Heart right ventricle (tissue), 16 donors: ENCODE measurements at regions of chr6 and their contacts with region 1.

Region 1: GRCh38 chr6:149925974-149926777 is 3.3 kb upstream of the RAET1G start:
- DNase-seq: peak; percentile 87 to 91
- ATAC-seq: peak; percentile 89 to 94 (median 92)
- H3K4me3 ChIP-seq: peak overlapping the region; percentile 38 to 62 (median 60)
- H3K27ac ChIP-seq: peak overlapping the region in 9 of 10 donors; percentile 27 to 67 (median 57)
- H3K4me1 ChIP-seq: peaks cover 3 to 33% (median 23%) of the 10 kb centered on the region in 9 donors
- H3K27me3 ChIP-seq: peaks cover 0 to 92% (median 28%) of the 10 kb centered on the region in 7 donors
- CTCF ChIP-seq: peak; percentile 81 to 93 (median 88)

Region 2: GRCh38 chr6:149565527-149566409 is 360.4 kb before region 1 on chr6 and contains the start of gene GINM1:
- intact Hi-C with region 1: loop called in 1 of 10 experiments (anchors 5 kb)
- DNase-seq: peak; percentile 93 to 97
- ATAC-seq: peak; percentile 96 to 98 (median 98)
- H3K4me3 ChIP-seq: peak within 1 kb of the TSS; percentile 80 to 100 (median 98)
- H3K27ac ChIP-seq: peak within 1 kb of the TSS; percentile 44 to 97 (median 95)
- H3K4me1 ChIP-seq: peaks cover 0 to 35% (median 20%) of the 10 kb centered on the region in 9 donors
- H3K27me3 ChIP-seq: no peaks in the 10 kb centered on the region
- CTCF ChIP-seq: peak in 8 of 9 donors; percentile 41 to 81 (median 64)
- total RNA-seq, gene GINM1: 48.6 to 59.3 (median 55.7) TPM

Region 3: DNA sequence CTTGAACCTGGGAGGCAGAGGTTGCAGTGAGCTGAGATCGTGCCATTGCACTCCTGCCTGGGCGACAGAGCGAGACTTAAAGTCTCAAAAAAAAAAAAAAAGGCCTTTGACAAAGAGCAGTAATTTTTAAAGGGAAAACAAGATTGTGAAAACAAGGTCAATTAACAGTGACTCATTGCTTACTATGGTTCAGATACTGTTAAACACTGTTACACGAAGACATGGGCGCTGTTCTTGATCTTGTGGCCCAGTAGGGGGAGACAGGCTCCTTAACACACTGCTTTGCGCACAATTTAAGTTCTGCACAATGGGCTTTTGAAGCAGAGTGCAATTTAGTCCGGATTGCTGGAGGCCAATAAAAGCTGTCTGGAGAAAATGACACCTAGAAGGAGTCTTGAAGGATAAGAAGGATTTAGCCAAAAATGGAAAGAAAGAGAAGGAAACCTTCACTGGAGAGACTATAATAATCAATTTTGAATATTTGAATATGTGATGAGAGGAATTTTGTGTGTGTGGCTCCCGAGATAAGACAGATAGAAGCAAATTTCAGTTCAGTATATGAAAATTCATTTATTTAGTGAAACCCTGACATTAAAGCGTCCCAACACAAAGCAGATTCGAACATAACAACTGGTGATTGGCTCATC is 202.3 kb before region 1 on chr6:
- intact Hi-C with region 1: loop called in 7 of 10 experiments (anchors 2 to 10 kb)
- DNase-seq: peak in 1 of 2 donors; percentile 31
- ATAC-seq: peak in 5 of 8 donors; percentile 81 to 87 (median 82)
- H3K4me3 ChIP-seq: no peak overlapping the region
- H3K27ac ChIP-seq: no peak overlapping the region
- H3K4me1 ChIP-seq: peaks cover 0 to 30% (median 0%) of the 10 kb centered on the region in 9 donors
- H3K27me3 ChIP-seq: no peaks in the 10 kb centered on the region
- CTCF ChIP-seq: peak; percentile 42 to 80 (median 70)

Region 4: DNA sequence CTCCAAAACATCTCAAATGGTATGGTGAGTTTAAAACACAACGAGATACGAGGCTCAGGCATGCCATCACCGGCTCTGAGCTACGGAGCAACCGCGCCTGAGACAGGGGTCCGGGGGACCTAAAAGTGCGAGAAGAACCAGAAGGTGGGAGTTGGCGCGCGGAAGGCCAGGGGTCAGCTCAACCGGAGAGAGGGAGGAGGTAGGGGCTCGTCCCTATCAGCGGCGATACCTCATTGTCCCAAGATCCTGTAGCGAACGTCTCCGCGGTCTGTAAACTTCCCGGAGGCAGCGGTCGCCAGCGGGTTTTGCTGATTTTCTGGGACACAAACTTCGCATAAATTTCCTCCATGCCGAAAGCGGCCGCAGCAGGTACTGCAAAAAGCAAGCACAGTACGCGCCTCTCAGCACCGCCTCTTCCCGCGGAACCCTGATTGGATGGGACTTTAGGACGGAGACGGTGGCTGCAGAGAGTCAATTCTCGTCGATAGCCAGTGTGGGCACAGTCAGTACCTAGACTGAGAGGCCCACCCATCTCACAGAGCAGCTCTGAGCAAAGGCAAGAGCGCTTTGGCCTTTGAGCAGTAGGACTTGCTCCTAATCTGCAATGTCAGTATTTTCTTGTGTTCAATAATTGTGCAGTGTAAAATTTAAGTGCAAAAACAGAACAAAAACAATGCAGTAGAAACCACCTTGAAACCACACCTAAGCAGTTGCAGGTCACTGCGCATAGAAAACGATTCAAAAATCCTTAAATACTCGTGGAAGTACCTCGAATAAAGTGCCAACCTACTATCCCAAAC is 179.8 kb before region 1 on chr6 and contains the start of gene NUP43:
- intact Hi-C with region 1: no loop called
- DNase-seq: peak; percentile 94 to 97
- ATAC-seq: peak; percentile 64 to 84 (median 80)
- H3K4me3 ChIP-seq: peak within 1 kb of the TSS; percentile 74 to 84 (median 78)
- H3K27ac ChIP-seq: peak within 1 kb of the TSS; percentile 16 to 85 (median 70)
- H3K4me1 ChIP-seq: peaks cover 0 to 41% (median 28%) of the 10 kb centered on the region in 9 donors
- H3K27me3 ChIP-seq: no peaks in the 10 kb centered on the region
- CTCF ChIP-seq: peak; percentile 19 to 75 (median 58)
- total RNA-seq, gene NUP43: 23.2 to 34.3 (median 30.6) TPM

Region 5: GRCh38 chr6:149840345-149841075 is 85.7 kb before region 1 on chr6:
- intact Hi-C with region 1: loop called in 7 of 10 experiments (anchors 1 to 5 kb)
- DNase-seq: peak; percentile 79 to 85
- ATAC-seq: peak; percentile 94 to 98 (median 96)
- H3K4me3 ChIP-seq: no peak overlapping the region
- H3K27ac ChIP-seq: peak overlapping the region in 4 of 10 donors; percentile 11 to 51 (median 33)
- H3K4me1 ChIP-seq: peaks cover 0 to 17% (median 11%) of the 10 kb centered on the region in 9 donors
- H3K27me3 ChIP-seq: no peaks in the 10 kb centered on the region
- CTCF ChIP-seq: peak; percentile 33 to 76 (median 60)